MCF 10A (cell line): ENCODE measurements at regions of chr5 and their contacts with region 1.

Region 1: DNA sequence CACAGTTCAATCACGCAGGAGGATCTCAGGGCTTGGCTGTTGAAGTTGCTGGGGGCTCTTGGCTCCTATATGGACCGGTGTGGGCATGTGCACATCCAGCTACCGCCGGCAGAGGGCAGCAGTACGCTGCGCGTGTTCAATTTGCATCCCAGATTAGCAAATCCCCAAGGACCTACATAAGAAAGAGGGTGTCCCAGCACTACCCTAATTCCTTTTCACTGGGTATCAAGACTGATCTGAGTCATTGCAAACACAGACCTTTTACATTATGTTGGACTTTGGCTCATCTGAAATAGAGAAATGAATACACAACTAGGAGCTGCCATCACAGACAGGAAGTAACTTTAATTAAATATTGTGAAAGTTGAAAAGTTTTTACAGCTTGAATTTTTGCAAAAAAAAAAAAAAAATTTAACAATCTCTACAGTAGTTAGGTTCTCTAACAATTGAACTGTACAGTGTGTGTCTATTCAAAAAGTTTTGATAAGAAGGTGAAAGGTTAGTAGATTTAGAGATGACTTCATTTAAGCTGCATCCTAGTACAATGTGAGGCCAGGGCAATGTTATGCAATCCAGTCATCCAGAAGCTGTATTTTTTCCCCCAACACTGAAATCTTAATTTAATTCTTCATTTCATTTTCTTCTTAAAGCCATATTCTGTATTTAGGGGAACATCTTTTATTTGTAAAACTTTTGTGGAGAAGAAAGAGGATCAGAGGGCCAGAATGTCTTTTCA is 404.0 kb downstream of the EBF1 start:
- DNase-seq: peak; percentile 72
- H3K4me3 Mint-ChIP-seq: no peak overlapping the region
- H3K27ac Mint-ChIP-seq: no peak overlapping the region
- H3K4me1 Mint-ChIP-seq: peaks cover 6% of the 10 kb centered on the region
- H3K27me3 Mint-ChIP-seq: peaks cover 22% of the 10 kb centered on the region
- CTCF ChIP-seq: peak; percentile 99

Region 2: GRCh38 chr5:158174918-158175851 is 520.6 kb before region 1 on chr5:
- CTCF ChIA-PET with region 1: interaction called, 166 read pairs
- POLR2A ChIA-PET with region 1: interaction called, 3 read pairs
- intact Hi-C with region 1: loop called (anchors 1 kb)
- DNase-seq: peak; percentile 84
- H3K4me3 Mint-ChIP-seq: no peak overlapping the region
- H3K27ac Mint-ChIP-seq: peak overlapping the region; percentile 1
- H3K4me1 Mint-ChIP-seq: peaks cover 7% of the 10 kb centered on the region
- H3K27me3 Mint-ChIP-seq: no peaks in the 10 kb centered on the region
- CTCF ChIP-seq: peak; percentile 98

Region 3: DNA sequence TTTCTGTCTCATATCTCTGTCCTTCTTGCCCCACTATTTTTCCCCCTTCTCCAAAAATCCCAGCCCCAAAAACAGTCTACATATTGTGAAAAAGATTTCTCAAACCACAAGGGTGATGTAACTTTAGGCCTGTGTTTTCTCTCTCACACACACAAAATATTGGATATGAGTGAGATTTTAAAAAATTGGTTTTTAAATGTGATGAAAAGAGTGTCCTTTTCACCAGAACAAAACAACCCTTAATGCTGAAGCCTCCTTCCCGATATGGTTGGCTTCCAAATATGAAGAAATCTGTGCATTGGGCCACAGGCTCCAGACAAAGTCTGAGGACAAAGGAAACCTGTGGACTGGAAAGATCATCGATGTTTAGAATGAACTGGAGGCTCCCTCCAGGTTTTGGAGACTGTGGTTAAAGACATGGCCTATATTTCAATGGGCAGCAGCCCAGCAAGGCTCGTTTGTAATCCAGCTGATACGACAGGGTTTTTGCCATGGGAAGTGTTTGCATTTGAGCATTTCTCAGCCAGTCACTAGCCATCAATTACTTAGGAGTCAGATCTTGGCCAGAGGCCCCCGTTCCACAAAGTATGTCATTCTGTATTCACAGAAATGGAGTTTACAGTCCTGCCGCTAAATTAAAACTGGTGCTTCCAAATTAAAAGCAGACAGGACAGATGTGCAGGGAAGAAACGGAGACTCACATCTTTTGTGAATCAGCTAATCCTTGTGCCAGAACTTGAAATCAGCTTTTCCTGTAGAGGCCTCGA is 142.4 kb before region 1 on chr5:
- CTCF ChIA-PET with region 1: no interaction called
- POLR2A ChIA-PET with region 1: no interaction called
- intact Hi-C with region 1: no loop called
- DNase-seq: no peak
- H3K4me3 Mint-ChIP-seq: no peak overlapping the region
- H3K27ac Mint-ChIP-seq: no peak overlapping the region
- H3K4me1 Mint-ChIP-seq: no peaks in the 10 kb centered on the region
- H3K27me3 Mint-ChIP-seq: no peaks in the 10 kb centered on the region
- CTCF ChIP-seq: no peak

Region 4: DNA sequence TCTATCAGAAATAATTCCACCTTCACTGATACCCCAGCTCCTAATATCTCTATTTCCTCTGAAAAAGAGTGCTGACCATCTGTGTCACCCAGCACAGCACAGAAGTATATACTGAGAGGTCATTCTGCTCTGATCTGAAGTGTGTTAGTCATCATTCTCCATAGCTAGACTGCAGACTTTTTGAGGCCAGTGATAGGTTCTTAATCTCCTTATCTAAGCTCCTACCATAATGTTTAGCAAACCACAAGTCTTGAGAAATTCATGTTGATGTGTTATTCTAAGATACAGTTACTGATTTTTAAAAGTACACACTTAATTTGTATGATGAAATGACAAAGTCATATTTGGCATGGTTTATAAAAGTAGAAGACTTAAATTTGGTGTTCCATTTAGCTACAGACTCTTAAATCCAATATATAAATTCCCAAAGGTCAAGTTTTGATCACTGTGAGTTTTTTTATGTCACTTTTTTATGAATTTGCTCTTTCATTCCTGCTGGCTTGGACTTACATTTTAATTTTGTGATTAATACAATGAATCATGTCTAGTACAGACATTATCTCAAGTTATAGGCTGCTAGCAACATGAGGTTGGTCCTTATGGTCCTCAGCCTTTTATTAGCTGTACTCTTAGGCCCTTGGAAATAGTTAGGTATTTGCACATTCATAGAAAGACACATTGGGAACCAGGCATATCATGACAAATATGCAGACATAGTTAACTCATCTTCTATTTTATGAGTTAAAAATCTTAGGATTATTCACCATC is 23.2 kb after region 1 on chr5:
- CTCF ChIA-PET with region 1: interaction called, 27 read pairs
- POLR2A ChIA-PET with region 1: no interaction called
- intact Hi-C with region 1: no loop called
- DNase-seq: no peak
- H3K4me3 Mint-ChIP-seq: no peak overlapping the region
- H3K27ac Mint-ChIP-seq: no peak overlapping the region
- H3K4me1 Mint-ChIP-seq: peaks cover 10% of the 10 kb centered on the region
- H3K27me3 Mint-ChIP-seq: peaks cover 29% of the 10 kb centered on the region
- CTCF ChIP-seq: no peak

Region 5: GRCh38 chr5:158848634-158849033 is 152.9 kb after region 1 on chr5:
- CTCF ChIA-PET with region 1: no interaction called
- POLR2A ChIA-PET with region 1: no interaction called
- intact Hi-C with region 1: no loop called
- DNase-seq: no peak
- H3K4me3 Mint-ChIP-seq: no peak overlapping the region
- H3K27ac Mint-ChIP-seq: no peak overlapping the region
- H3K4me1 Mint-ChIP-seq: peaks cover 10% of the 10 kb centered on the region
- H3K27me3 Mint-ChIP-seq: no peaks in the 10 kb centered on the region
- CTCF ChIP-seq: no peak

Region 6: GRCh38 chr5:159003037-159004030 is 307.6 kb after region 1 on chr5:
- CTCF ChIA-PET with region 1: interaction called, 11 read pairs
- POLR2A ChIA-PET with region 1: no interaction called
- intact Hi-C with region 1: no loop called
- DNase-seq: peak; percentile 91
- H3K4me3 Mint-ChIP-seq: peak overlapping the region; percentile 3
- H3K27ac Mint-ChIP-seq: peak overlapping the region; percentile 97
- H3K4me1 Mint-ChIP-seq: peaks cover 35% of the 10 kb centered on the region
- H3K27me3 Mint-ChIP-seq: no peaks in the 10 kb centered on the region
- CTCF ChIP-seq: no peak

Region 7: DNA sequence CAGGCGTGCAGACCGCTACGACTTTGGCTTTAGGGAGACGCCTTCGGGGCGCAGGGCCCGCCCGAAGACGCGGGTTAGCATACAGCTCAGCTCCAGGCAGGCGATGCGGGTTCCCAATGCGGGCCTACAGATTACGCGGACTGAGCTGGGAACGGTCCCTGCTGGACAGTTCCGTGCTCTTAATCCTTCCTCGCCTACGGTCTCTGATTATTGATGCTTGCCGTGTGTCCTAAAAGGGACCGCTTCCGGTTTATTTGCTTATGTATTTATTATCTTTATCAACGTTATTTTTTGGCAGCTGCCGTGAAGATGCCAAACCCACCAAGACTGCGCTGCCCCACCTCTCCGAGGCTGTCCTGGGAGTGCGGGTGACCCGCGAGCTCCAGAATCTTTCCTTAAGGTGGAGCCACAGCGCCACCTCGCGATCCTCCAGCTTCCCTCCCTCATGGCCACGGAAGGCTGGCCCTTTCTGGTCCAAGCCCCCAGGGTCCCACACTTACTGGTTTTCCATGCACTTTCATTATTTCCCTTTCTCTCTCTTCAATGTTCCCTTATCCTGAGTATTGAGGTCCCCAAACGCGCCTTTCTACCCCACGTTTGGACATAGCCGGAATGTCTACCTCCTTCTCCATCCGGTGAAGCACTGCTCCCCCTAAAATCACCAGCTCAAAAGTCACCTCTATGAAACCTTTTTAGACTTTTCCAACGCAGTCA is 411.0 kb after region 1 on chr5:
- CTCF ChIA-PET with region 1: interaction called, 513 read pairs
- POLR2A ChIA-PET with region 1: interaction called, 48 read pairs
- intact Hi-C with region 1: loop called (anchors 1 kb)
- DNase-seq: peak; percentile 86
- H3K4me3 Mint-ChIP-seq: peak overlapping the region; percentile 64
- H3K27ac Mint-ChIP-seq: peak overlapping the region; percentile 7
- H3K4me1 Mint-ChIP-seq: peaks cover 14% of the 10 kb centered on the region
- H3K27me3 Mint-ChIP-seq: peaks cover 63% of the 10 kb centered on the region
- CTCF ChIP-seq: peak; percentile 100

Region 8: GRCh38 chr5:159133041-159133741 is 437.4 kb after region 1 on chr5:
- CTCF ChIA-PET with region 1: interaction called, 48 read pairs
- POLR2A ChIA-PET with region 1: interaction called, 3 read pairs
- intact Hi-C with region 1: loop called (anchors 1 kb)
- DNase-seq: peak; percentile 80
- H3K4me3 Mint-ChIP-seq: no peak overlapping the region
- H3K27ac Mint-ChIP-seq: no peak overlapping the region
- H3K4me1 Mint-ChIP-seq: peaks cover 7% of the 10 kb centered on the region
- H3K27me3 Mint-ChIP-seq: no peaks in the 10 kb centered on the region
- CTCF ChIP-seq: peak; percentile 92